CD4-positive, alpha-beta memory T cell (primary cell): ENCODE measurements at regions of chr20 and their contacts with region 1.

Region 1: DNA sequence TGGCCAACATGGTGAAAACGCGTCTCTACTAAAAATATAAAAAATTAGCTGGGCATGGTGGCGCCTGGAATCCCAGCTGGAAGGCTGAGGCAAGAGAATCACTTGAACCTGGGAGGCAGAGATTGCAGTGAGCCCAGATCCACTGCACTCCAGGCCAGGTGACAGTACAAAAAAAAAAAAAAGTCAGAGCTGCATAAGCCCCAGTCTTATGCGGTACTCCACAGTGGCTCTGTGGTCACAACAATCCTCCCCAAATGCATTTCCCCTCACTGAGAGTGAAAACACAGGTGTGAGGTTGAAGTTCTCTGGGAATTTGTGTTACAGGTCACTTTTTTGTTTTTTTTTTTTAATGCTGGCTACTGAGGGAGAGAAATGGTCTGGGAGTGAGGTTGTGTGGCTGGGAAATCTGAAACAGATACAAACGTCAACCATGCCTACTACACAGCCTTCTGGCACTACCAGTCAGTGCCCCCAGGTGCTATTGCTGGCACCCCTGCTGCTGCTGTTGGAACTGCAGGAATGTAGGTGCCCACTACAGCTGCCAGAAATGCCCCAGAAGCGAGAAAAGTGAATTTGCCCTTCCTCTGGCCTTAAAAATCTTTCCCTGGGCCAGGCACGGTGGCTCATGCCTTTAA is 5.7 kb downstream of the MRPS26 start:
- DNase-seq: no peak
- H3K4me3 ChIP-seq: no peak overlapping the region
- H3K4me3 Mint-ChIP-seq: no peak overlapping the region
- H3K27ac ChIP-seq: no peak overlapping the region
- H3K27ac Mint-ChIP-seq: peak overlapping the region in 2 of 7 donors; percentile 46 to 78
- H3K4me1 ChIP-seq: peaks cover 19% of the 10 kb centered on the region
- H3K4me1 Mint-ChIP-seq: peaks cover 6 to 18% (median 9%) of the 10 kb centered on the region in 4 donors
- H3K27me3 ChIP-seq: no peaks in the 10 kb centered on the region
- H3K27me3 Mint-ChIP-seq: no peaks in the 10 kb centered on the region

Region 2: GRCh38 chr20:3068986-3069900 is 17.7 kb after region 1 on chr20:
- CTCF ChIA-PET with region 1: interaction called, 10 read pairs
- POLR2A ChIA-PET with region 1: interaction called, 3 read pairs
- intact Hi-C with region 1: no loop called
- DNase-seq: peak in 4 of 5 donors; percentile 19 to 37 (median 27)
- H3K4me3 ChIP-seq: no peak overlapping the region
- H3K4me3 Mint-ChIP-seq: peak overlapping the region in 1 of 8 donors; percentile 43
- H3K27ac ChIP-seq: no peak overlapping the region
- H3K27ac Mint-ChIP-seq: peak overlapping the region in 1 of 7 donors; percentile 72
- H3K4me1 ChIP-seq: peaks cover 18% of the 10 kb centered on the region
- H3K4me1 Mint-ChIP-seq: peaks cover 16 to 20% (median 17%) of the 10 kb centered on the region in 4 donors
- H3K27me3 ChIP-seq: no peaks in the 10 kb centered on the region
- H3K27me3 Mint-ChIP-seq: no peaks in the 10 kb centered on the region

Region 3: DNA sequence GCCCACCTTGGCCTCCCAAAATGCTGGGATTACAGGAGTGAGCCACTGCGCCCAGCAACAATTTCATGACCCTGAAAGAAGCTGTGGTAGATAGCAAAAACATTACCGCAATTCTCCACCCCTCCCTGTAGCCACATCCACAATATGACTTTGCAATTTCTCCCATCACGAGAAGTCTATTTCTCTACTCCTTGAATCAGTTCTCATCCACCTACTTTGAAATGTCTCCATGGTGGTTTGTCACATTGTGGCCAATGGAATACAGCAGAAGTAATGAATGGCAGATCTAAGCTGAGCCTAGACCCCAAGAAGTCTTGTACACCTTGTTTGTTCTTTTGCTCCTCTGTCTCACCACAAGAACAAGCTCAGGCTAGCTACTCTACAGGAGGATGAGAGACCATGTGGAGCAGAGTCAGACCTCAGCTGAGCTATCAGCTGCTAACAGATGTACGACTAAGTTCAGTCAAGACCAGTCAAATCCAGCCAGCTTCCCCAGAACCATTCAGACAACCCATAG is 26.2 kb after region 1 on chr20:
- CTCF ChIA-PET with region 1: interaction called, 16 read pairs
- POLR2A ChIA-PET with region 1: interaction called, 4 read pairs
- intact Hi-C with region 1: loop called (anchors 1 kb)
- DNase-seq: peak in 2 of 5 donors; percentile 16 to 24
- H3K4me3 ChIP-seq: no peak overlapping the region
- H3K4me3 Mint-ChIP-seq: peak overlapping the region in 3 of 8 donors; percentile 32 to 69 (median 37)
- H3K27ac ChIP-seq: no peak overlapping the region
- H3K27ac Mint-ChIP-seq: peak overlapping the region in 2 of 7 donors; percentile 53 to 57
- H3K4me1 ChIP-seq: peaks cover 13% of the 10 kb centered on the region
- H3K4me1 Mint-ChIP-seq: peaks cover 5 to 25% (median 6%) of the 10 kb centered on the region in 4 donors
- H3K27me3 ChIP-seq: peaks cover 9% of the 10 kb centered on the region
- H3K27me3 Mint-ChIP-seq: peaks cover 13 to 19% of the 10 kb centered on the region in 2 donors

Region 4: DNA sequence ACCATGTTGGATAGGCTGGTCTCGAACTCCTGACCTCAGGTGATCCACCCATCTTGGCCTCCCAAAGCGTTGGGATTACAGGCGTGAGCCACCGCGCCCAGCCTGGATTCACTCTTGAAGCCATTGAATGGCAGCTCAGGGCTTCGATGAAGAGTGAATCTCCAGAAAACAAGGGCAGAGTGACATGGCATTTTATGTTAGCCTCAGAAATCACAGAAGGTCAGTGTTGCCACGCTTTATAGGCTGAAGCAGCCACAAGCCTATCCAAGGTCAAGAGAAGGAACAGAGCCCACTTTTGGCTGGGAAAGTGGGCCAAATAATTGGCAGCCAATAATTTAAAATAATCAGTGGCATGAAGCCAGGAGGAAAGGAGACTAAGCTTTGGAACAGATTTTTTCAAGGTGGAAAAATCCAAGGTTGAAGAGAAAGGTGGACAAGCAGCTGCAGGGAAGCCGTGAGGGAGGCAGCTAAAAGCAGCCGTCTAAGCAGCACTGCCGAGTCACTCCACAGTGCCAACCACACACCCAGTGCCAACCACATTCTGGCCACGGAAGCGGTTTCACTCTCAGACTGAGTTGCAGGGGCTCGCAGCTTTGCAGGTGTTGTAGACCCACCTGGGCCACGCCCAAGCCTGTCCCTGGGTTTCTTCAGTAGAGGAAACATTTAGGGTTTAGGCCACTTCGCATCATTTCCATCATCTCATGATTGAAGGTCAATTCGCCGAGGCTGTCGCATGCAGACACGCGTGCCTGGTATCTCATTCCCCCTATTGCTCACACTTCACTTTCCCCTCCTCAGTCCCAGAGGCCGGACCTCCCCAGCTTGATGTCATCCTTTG is 50.5 kb after region 1 on chr20:
- CTCF ChIA-PET with region 1: interaction called, 10 read pairs
- POLR2A ChIA-PET with region 1: no interaction called
- intact Hi-C with region 1: no loop called
- DNase-seq: peak in 4 of 5 donors; percentile 28 to 52 (median 34)
- H3K4me3 ChIP-seq: no peak overlapping the region
- H3K4me3 Mint-ChIP-seq: peak overlapping the region in 7 of 8 donors; percentile 19 to 77 (median 54)
- H3K27ac ChIP-seq: no peak overlapping the region
- H3K27ac Mint-ChIP-seq: peak overlapping the region in 5 of 7 donors; percentile 40 to 90 (median 56)
- H3K4me1 ChIP-seq: peaks cover 23% of the 10 kb centered on the region
- H3K4me1 Mint-ChIP-seq: peaks cover 13 to 23% (median 19%) of the 10 kb centered on the region in 4 donors
- H3K27me3 ChIP-seq: no peaks in the 10 kb centered on the region
- H3K27me3 Mint-ChIP-seq: no peaks in the 10 kb centered on the region

Region 5: DNA sequence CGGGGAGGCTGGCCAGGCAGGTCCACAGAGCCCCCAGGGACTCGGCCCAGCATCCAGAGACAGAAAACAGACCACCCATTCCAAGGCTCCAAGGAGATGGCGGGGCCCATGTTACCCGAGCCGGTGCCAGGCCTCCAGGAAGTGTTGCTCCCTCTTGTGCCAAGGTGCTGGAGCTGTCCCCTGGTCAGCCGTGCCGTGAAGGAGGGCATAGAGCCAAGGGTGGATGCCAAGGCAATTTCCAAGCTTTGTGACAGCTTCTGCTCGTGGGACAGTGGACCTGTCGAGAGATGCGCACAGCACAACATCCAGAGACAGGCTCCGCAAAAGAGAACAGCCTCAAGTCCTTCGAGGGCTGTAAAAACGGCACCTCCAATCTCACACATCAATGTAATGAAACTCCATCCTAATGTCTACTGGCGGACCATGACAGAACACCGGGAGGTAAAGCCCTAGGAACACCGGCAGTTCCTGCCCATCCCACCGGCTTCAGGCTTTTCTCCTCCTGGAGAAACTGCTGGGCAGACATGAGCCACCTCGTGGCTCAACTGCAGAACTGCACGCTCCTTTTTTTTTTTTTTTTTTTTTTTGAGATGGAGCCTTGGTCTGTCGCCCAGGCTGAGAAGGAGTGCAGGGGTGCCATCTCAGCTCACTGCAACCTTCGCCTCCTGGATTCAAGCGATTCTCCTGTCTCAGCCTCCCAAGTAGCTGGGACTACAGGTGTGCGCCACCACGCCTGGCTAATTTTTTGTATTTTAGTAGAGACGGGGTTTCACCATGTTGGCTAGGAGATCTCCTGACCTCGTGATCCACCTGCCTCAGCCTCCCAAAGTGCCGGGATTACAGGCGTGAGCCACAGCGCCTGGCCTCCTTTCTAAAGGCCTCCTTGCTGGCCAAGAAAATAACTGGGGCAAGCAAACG is 63.9 kb after region 1 on chr20:
- CTCF ChIA-PET with region 1: interaction called, 41 read pairs
- POLR2A ChIA-PET with region 1: no interaction called
- intact Hi-C with region 1: loop called (anchors 1 kb)
- DNase-seq: peak in 4 of 5 donors; percentile 27 to 43 (median 34)
- H3K4me3 ChIP-seq: no peak overlapping the region
- H3K4me3 Mint-ChIP-seq: no peak overlapping the region
- H3K27ac ChIP-seq: no peak overlapping the region
- H3K27ac Mint-ChIP-seq: peak overlapping the region in 4 of 7 donors; percentile 62 to 81 (median 66)
- H3K4me1 ChIP-seq: peaks cover 6% of the 10 kb centered on the region
- H3K4me1 Mint-ChIP-seq: peaks cover 5 to 34% (median 8%) of the 10 kb centered on the region in 4 donors
- H3K27me3 ChIP-seq: no peaks in the 10 kb centered on the region
- H3K27me3 Mint-ChIP-seq: no peaks in the 10 kb centered on the region

Region 6: GRCh38 chr20:3121271-3121911 is 69.9 kb after region 1 on chr20:
- CTCF ChIA-PET with region 1: interaction called, 41 read pairs
- POLR2A ChIA-PET with region 1: no interaction called
- intact Hi-C with region 1: no loop called
- DNase-seq: peak in 4 of 5 donors; percentile 32 to 48 (median 45)
- H3K4me3 ChIP-seq: peak overlapping the region; percentile 2 to 17
- H3K4me3 Mint-ChIP-seq: peak overlapping the region; percentile 61 to 80 (median 69)
- H3K27ac ChIP-seq: peak overlapping the region; percentile 18
- H3K27ac Mint-ChIP-seq: peak overlapping the region; percentile 80 to 98 (median 96)
- H3K4me1 ChIP-seq: peaks cover 35% of the 10 kb centered on the region
- H3K4me1 Mint-ChIP-seq: peaks cover 22 to 55% (median 35%) of the 10 kb centered on the region in 4 donors
- H3K27me3 ChIP-seq: no peaks in the 10 kb centered on the region
- H3K27me3 Mint-ChIP-seq: no peaks in the 10 kb centered on the region

Region 7: GRCh38 chr20:3204124-3204822 is 152.8 kb after region 1 on chr20 and contains the start of gene DDRGK1:
- CTCF ChIA-PET with region 1: interaction called, 5 read pairs
- POLR2A ChIA-PET with region 1: interaction called, 13 read pairs
- intact Hi-C with region 1: loop called (anchors 5 kb)
- DNase-seq: peak; percentile 86 to 92 (median 91)
- H3K4me3 ChIP-seq: peak within 1 kb of the TSS; percentile 94 to 99
- H3K4me3 Mint-ChIP-seq: peak within 1 kb of the TSS; percentile 93 to 98 (median 97)
- H3K27ac ChIP-seq: peak within 1 kb of the TSS; percentile 91
- H3K27ac Mint-ChIP-seq: peak within 1 kb of the TSS; percentile 96 to 97 (median 97)
- H3K4me1 ChIP-seq: peaks cover 31% of the 10 kb centered on the region
- H3K4me1 Mint-ChIP-seq: peaks cover 9 to 38% (median 24%) of the 10 kb centered on the region in 4 donors
- H3K27me3 ChIP-seq: no peaks in the 10 kb centered on the region
- H3K27me3 Mint-ChIP-seq: no peaks in the 10 kb centered on the region
- total RNA-seq, gene DDRGK1: 55.6 to 61.0 TPM